ENCODE measurements at regions of chr10 and their contacts with region 1.

Region 1: DNA sequence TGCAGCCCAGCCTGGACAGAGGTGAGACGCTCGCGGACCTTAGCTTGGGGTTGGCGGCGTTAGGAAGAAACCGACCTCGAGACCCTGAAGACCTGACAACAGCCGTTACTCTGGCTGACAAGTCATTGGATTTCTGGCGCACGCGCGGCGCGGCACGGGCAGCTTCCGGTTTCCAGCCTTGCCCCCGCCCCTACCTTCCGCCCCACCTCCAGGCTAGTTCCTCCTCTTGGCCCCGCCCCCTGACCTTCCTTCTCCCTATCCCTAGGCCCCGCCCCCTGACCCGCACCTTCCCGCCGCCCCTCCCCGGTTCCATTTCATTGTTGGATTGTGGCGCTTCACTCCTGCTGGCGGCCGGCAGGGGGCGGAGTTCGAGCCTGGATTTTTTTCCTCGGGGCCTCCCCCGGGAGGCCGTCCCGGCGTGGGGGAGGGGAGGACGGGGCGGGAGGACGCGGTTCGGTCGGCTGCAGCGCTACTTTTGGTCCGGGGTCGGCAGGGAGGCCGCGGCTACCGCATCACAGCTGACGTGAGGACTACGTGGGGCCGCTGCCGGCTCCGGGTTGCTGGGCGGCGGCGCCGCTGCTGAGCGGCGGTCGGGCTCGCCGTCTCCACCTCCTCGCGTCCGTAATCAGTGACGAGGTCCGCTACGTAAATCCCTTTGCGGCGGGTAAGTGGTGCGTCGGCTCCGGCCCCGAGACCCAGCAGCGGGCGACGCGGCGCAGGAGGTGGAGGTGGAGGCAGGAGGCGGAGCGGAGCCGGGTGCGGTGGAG is at the start of gene CREM:
- DNase-seq: peak; percentile 98 to 100 (median 99)
- ATAC-seq: peak; percentile 90
- H3K4me3 ChIP-seq: peak within 1 kb of the TSS; percentile 84
- H3K4me3 Mint-ChIP-seq: peak within 1 kb of the TSS; percentile 63 to 93 (median 91)
- H3K27ac ChIP-seq: peak within 1 kb of the TSS; percentile 100
- H3K27ac Mint-ChIP-seq: peak within 1 kb of the TSS; percentile 85 to 99 (median 95)
- H3K4me1 ChIP-seq: peaks cover 17 to 20% of the 10 kb centered on the region in 2 donors
- H3K4me1 Mint-ChIP-seq: peaks cover 16 to 61% (median 47%) of the 10 kb centered on the region in 7 donors
- H3K27me3 ChIP-seq: no peaks in the 10 kb centered on the region
- H3K27me3 Mint-ChIP-seq: no peaks in the 10 kb centered on the region
- total RNA-seq, gene CREM: 13.3 to 76.2 (median 31.6) TPM

Region 2: DNA sequence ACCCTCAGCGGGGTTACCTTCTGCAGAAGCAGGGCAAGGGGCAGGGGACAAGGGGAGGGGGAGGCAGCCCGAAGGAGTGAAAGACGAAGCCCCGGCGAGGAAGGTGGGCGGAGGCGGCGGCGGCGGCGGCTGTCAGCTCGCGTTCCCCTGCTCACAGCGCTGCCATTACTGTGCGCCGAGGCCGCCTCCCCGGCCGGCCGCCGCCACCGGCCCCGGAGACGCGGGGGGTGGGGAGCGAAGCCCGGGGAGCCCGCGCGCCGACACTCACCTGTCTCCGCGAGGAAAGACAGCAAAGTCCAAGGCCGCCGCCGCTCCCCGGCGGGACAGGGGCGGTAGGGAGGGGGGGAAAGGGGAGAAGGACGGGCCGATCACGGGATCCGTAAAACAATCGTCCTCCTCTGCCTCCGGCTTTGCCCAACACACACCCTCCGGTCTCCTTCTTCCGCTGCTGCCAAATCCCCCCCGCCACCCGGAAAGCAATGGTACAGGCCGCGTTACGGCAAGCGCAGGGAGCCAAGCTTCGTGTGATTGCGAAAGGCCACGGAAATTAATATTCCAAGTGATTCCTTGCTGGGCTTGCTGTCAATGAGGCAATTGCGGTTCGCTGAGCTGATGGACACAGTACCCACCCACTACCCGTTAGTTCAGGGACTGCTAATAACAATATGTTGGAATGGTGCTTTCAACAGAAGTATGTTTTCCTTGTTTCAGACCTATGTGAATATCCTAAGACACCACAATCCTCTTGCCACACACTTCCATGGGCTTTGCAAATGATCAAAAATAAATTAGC is 36.4 kb before region 1 on chr10 and contains the start of gene CUL2:
- CTCF ChIA-PET with region 1: no interaction called
- POLR2A ChIA-PET with region 1: interaction called, 22 read pairs
- intact Hi-C with region 1: loop called (anchors 1 kb)
- DNase-seq: peak; percentile 85 to 98 (median 94)
- ATAC-seq: peak; percentile 96
- H3K4me3 ChIP-seq: peak within 1 kb of the TSS; percentile 65
- H3K4me3 Mint-ChIP-seq: peak within 1 kb of the TSS; percentile 84 to 99 (median 94)
- H3K27ac ChIP-seq: peak within 1 kb of the TSS; percentile 98
- H3K27ac Mint-ChIP-seq: peak within 1 kb of the TSS; percentile 91 to 99 (median 97)
- H3K4me1 ChIP-seq: peaks cover 35 to 41% of the 10 kb centered on the region in 2 donors
- H3K4me1 Mint-ChIP-seq: peaks cover 31 to 55% (median 52%) of the 10 kb centered on the region in 7 donors
- H3K27me3 ChIP-seq: no peaks in the 10 kb centered on the region
- H3K27me3 Mint-ChIP-seq: peaks cover 0 to 8% (median 0%) of the 10 kb centered on the region in 5 donors
- total RNA-seq, gene CUL2: 30.9 to 43.7 (median 36.0) TPM

Region 3: GRCh38 chr10:35165136-35165535 is 38.4 kb after region 1 on chr10:
- CTCF ChIA-PET with region 1: interaction called, 10 read pairs
- POLR2A ChIA-PET with region 1: no interaction called
- intact Hi-C with region 1: no loop called
- DNase-seq: no peak
- ATAC-seq: peak; percentile 38
- H3K4me3 ChIP-seq: no peak overlapping the region
- H3K4me3 Mint-ChIP-seq: no peak overlapping the region
- H3K27ac ChIP-seq: no peak overlapping the region
- H3K27ac Mint-ChIP-seq: peak overlapping the region in 2 of 9 donors; percentile 32 to 69
- H3K4me1 ChIP-seq: no peaks in the 10 kb centered on the region
- H3K4me1 Mint-ChIP-seq: no peaks in the 10 kb centered on the region
- H3K27me3 ChIP-seq: no peaks in the 10 kb centered on the region
- H3K27me3 Mint-ChIP-seq: no peaks in the 10 kb centered on the region

Region 4: GRCh38 chr10:35447693-35448407 is 321.1 kb after region 1 on chr10:
- CTCF ChIA-PET with region 1: no interaction called
- POLR2A ChIA-PET with region 1: no interaction called
- intact Hi-C with region 1: loop called in 1 of 2 experiments (anchors 10 kb)
- DNase-seq: peak in 7 of 9 donors; percentile 57 to 80 (median 73)
- ATAC-seq: peak; percentile 78
- H3K4me3 ChIP-seq: peak overlapping the region; percentile 38
- H3K4me3 Mint-ChIP-seq: peak overlapping the region; percentile 73 to 89 (median 82)
- H3K27ac ChIP-seq: peak overlapping the region; percentile 65
- H3K27ac Mint-ChIP-seq: peak overlapping the region; percentile 91 to 99 (median 97)
- H3K4me1 ChIP-seq: peaks cover 30 to 62% of the 10 kb centered on the region in 2 donors
- H3K4me1 Mint-ChIP-seq: peaks cover 56 to 83% (median 80%) of the 10 kb centered on the region in 7 donors
- H3K27me3 ChIP-seq: no peaks in the 10 kb centered on the region
- H3K27me3 Mint-ChIP-seq: no peaks in the 10 kb centered on the region

Region 5: DNA sequence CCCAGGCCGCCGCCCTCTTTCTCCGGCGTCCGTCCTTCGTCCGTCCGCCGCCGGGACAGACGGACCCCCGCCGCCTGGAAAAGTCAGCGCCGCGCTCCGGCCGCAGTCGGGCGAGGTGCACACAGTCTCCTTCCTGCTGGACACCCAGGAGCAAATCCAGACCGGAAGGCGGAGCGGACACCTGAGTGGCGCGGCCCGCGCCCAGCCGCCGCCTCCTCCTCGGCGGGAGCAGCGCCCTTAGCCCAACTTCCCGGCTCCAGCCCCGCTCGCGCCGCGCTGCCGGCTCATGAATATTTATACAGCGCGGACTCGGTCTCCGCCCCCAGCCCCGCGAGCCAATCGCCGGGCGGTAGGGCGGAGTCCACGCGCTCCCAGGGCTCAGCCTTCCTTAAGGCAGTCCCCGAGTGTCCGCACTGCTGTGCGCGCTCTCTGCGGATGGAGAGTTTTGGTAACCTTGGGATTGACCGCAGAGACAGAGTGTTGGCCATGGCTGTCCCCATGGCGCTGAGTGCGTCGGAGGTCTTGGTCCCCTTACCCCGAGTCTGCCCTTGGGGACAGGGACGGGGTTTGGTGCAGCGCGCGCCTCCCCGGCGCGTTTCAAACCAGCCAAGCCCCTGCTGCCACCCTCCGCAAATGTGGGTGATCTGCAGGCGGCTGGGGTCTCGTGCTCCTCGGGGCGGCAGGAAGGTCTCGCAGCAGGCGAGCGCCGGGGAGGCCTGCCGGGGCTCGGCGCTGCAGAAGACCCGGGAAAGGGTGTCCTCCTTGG is 515.5 kb after region 1 on chr10 and contains the start of gene FZD8:
- CTCF ChIA-PET with region 1: no interaction called
- POLR2A ChIA-PET with region 1: no interaction called
- intact Hi-C with region 1: loop called (anchors 2 kb)
- DNase-seq: peak; percentile 35 to 77 (median 58)
- ATAC-seq: peak; percentile 87
- H3K4me3 ChIP-seq: peak within 1 kb of the TSS; percentile 80
- H3K4me3 Mint-ChIP-seq: peak within 1 kb of the TSS; percentile 81 to 94 (median 88)
- H3K27ac ChIP-seq: no peak within 1 kb of the TSS
- H3K27ac Mint-ChIP-seq: peak within 1 kb of the TSS in 5 of 9 donors; percentile 4 to 49 (median 42)
- H3K4me1 ChIP-seq: peaks cover 4 to 5% of the 10 kb centered on the region in 2 donors
- H3K4me1 Mint-ChIP-seq: peaks cover 9 to 42% (median 22%) of the 10 kb centered on the region in 7 donors
- H3K27me3 ChIP-seq: peaks cover 3 to 9% of the 10 kb centered on the region in 2 donors
- H3K27me3 Mint-ChIP-seq: peaks cover 7 to 79% (median 26%) of the 10 kb centered on the region in 5 donors
- total RNA-seq, gene FZD8: 0.19 to 1.7 (median 0.47) TPM